HEK293 (cell line): ENCODE measurements at regions of chr20 and their contacts with region 1.

Region 1: GRCh38 chr20:35849706-35850105 is 77.9 kb downstream of the PHF20 start:
- H3K4me3 ChIP-seq: no peak overlapping the region
- H3K27ac ChIP-seq: no peak overlapping the region
- H3K4me1 ChIP-seq: no peaks in the 10 kb centered on the region
- CTCF ChIP-seq: no peak

Region 2: DNA sequence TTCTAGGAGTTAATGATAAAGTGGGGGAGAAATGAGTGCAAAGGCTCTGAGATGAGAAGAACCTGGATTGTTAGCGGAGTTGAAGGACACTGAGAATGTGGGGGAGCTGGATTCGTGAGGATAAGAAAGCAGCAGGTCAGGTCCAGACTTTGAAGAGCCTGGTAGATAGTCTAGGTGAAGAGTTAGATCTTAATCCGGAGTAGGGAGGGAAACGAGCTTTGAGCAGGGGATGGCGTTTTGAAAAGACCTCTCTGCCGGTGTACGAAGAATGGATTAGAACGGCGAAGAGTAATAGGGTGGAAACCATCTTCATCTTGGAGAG is 78.4 kb before region 1 on chr20:
- CTCF ChIA-PET with region 1: no interaction called
- POLR2A ChIA-PET with region 1: no interaction called
- H3K4me3 ChIP-seq: no peak overlapping the region
- H3K27ac ChIP-seq: no peak overlapping the region
- H3K4me1 ChIP-seq: peaks cover 13% of the 10 kb centered on the region
- CTCF ChIP-seq: no peak

Region 3: DNA sequence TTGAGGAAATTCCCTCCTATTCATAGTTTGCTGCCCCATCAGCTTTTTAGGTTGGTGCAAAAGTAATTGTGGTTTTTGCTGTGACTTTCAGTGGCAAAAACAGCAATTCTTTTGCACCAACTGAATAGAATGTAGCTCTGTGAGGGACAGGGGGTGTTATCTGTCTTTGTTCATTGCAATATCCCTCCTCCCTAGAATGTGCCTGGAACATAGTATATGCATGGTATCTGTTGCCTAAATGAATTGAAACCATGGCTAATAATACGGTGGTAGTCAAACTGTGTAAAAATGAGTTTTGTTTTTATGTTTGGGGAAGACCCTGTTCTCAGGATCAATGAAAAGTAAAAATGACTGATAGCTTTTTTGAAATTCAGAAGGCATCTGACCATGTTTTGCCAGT is 59.5 kb after region 1 on chr20:
- CTCF ChIA-PET with region 1: no interaction called
- POLR2A ChIA-PET with region 1: interaction called, 11 read pairs
- H3K4me3 ChIP-seq: no peak overlapping the region
- H3K27ac ChIP-seq: no peak overlapping the region
- H3K4me1 ChIP-seq: no peaks in the 10 kb centered on the region
- CTCF ChIP-seq: no peak